Activated naive CD4-positive, alpha-beta T cell treated with anti-CD3 and anti-CD28 coated beads, Interleukin-2, amount 10 ng/mL, durations not matched to agents 7 days and 5 days (primary cell): ENCODE measurements at regions of chr14 and their contacts with region 1.

Region 1: GRCh38 chr14:61837336-61838229 is 75.4 kb downstream of the SNAPC1 start:
- DNase-seq: peak; percentile 84
- H3K4me3 Mint-ChIP-seq: no peak overlapping the region
- H3K27ac Mint-ChIP-seq: no peak overlapping the region
- H3K4me1 Mint-ChIP-seq: peaks cover 8% of the 10 kb centered on the region
- H3K27me3 Mint-ChIP-seq: peaks cover 7% of the 10 kb centered on the region

Region 2: DNA sequence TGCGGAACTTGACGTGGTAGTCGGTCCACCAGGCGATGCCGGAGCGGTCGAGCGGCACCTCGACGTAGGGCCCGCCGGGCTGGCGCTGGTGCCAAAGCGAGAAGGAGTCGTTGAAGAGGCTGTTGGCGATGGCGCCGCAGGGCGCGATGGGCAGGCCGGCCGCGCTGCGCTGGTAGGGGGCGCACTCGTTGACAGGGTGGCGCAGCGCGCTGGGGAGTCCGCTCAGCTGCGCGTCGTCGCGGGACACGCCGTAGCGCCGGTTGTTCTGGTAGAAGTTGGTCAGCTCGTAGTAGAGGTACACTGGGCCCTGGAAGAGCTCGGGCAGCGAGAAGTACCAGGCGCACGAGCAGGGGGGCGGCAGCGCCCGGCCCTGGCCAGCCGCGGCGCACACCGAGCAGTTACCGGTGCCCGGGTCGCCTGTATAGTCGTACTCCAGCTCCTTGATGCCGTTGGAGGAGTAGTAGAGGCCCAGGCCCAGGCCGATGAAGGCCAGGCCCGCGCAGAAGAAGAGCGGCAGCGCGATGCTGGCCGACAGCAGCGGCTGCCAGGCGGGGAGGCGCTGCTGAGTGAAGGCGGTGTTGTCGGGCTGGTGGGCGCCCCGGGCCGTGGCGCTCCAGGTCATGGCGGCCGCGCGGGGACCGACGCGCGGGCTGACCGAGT is 556.9 kb before region 1 on chr14:
- CTCF ChIA-PET with region 1: interaction called, 14 read pairs
- DNase-seq: peak; percentile 78
- H3K4me3 Mint-ChIP-seq: peak overlapping the region; percentile 81
- H3K27ac Mint-ChIP-seq: peak overlapping the region; percentile 80
- H3K4me1 Mint-ChIP-seq: peaks cover 35% of the 10 kb centered on the region
- H3K27me3 Mint-ChIP-seq: peaks cover 48% of the 10 kb centered on the region

Region 3: DNA sequence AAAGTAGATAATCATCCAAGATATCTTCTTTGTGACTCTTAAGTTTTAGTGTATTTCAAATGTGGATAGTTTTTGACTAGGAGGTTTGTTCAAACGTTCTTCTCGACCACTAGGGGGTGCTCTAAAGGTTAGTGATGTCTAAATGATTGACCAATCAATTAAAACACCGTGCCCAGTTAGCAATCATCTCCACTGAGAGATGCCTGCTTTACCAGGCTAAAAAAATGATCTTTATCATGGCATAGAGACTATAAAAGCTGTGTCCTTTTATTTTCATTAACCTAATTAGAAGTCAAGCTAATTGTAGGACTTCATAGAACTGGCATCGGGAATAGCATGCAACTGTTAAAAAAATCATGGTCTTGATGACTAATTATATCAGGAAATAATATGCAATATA is 362.3 kb before region 1 on chr14:
- CTCF ChIA-PET with region 1: interaction called, 38 read pairs
- DNase-seq: no peak
- H3K4me3 Mint-ChIP-seq: peak overlapping the region; percentile 18
- H3K27ac Mint-ChIP-seq: peak overlapping the region; percentile 95
- H3K4me1 Mint-ChIP-seq: peaks cover 95% of the 10 kb centered on the region
- H3K27me3 Mint-ChIP-seq: no peaks in the 10 kb centered on the region

Region 4: GRCh38 chr14:61644834-61645233 is 192.7 kb before region 1 on chr14:
- CTCF ChIA-PET with region 1: no interaction called
- DNase-seq: no peak
- H3K4me3 Mint-ChIP-seq: no peak overlapping the region
- H3K27ac Mint-ChIP-seq: no peak overlapping the region
- H3K4me1 Mint-ChIP-seq: peaks cover 26% of the 10 kb centered on the region
- H3K27me3 Mint-ChIP-seq: no peaks in the 10 kb centered on the region

Region 5: GRCh38 chr14:61678975-61679374 is 158.6 kb before region 1 on chr14:
- CTCF ChIA-PET with region 1: no interaction called
- DNase-seq: no peak
- H3K4me3 Mint-ChIP-seq: no peak overlapping the region
- H3K27ac Mint-ChIP-seq: no peak overlapping the region
- H3K4me1 Mint-ChIP-seq: peaks cover 5% of the 10 kb centered on the region
- H3K27me3 Mint-ChIP-seq: peaks cover 11% of the 10 kb centered on the region

Region 6: GRCh38 chr14:61694830-61695694 is 142.5 kb before region 1 on chr14 and contains the start of gene HIF1A:
- CTCF ChIA-PET with region 1: no interaction called
- DNase-seq: peak; percentile 98
- H3K4me3 Mint-ChIP-seq: peak within 1 kb of the TSS; percentile 91
- H3K27ac Mint-ChIP-seq: peak within 1 kb of the TSS; percentile 97
- H3K4me1 Mint-ChIP-seq: peaks cover 62% of the 10 kb centered on the region
- H3K27me3 Mint-ChIP-seq: no peaks in the 10 kb centered on the region

Region 7: DNA sequence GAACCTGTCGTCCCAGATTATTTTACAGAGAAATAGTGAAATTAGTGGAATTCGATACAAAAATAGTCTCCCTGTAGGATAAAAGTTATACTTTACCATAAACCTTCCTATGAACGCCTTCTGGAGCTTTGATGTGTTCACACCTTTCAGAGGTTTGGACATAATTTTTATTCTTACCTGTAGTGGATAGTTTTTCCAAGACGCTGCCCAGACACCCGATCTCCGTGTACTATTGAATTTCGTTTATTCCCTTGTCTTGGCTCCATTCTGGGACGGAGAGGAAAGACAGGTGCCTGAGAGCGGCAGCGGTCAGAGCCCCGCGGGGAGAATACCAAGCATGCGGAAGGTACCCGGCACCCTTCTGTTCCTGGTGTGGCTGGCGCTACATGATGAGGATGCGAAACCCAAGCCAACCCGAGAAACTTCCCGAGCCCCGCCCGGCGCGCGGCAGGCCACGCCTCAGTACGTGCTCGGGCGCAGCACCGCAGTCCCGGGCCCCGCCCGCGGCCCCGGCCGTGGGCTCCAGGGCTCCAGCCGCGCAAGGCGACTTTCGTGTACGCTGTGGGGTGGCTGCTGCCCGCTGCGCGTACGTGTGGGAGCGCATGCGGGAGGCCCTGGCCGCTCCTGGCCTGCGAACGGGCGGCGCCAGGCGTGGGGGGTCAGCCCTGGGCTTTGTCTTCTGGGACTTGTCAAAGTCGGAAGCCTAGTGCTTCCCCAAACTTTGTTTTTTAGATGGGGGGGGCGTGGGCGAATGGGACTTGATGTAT is 86.7 kb before region 1 on chr14:
- CTCF ChIA-PET with region 1: interaction called, 23 read pairs
- DNase-seq: peak; percentile 89
- H3K4me3 Mint-ChIP-seq: peak overlapping the region; percentile 95
- H3K27ac Mint-ChIP-seq: peak overlapping the region; percentile 86
- H3K4me1 Mint-ChIP-seq: peaks cover 53% of the 10 kb centered on the region
- H3K27me3 Mint-ChIP-seq: peaks cover 5% of the 10 kb centered on the region

Region 8: GRCh38 chr14:61780125-61780524 is 57.5 kb before region 1 on chr14:
- CTCF ChIA-PET with region 1: interaction called, 13 read pairs
- DNase-seq: peak; percentile 42
- H3K4me3 Mint-ChIP-seq: peak overlapping the region; percentile 49
- H3K27ac Mint-ChIP-seq: peak overlapping the region; percentile 92
- H3K4me1 Mint-ChIP-seq: peaks cover 48% of the 10 kb centered on the region
- H3K27me3 Mint-ChIP-seq: no peaks in the 10 kb centered on the region

Region 9: GRCh38 chr14:61866932-61867920 is 29.6 kb after region 1 on chr14:
- CTCF ChIA-PET with region 1: no interaction called
- DNase-seq: no peak
- H3K4me3 Mint-ChIP-seq: no peak overlapping the region
- H3K27ac Mint-ChIP-seq: no peak overlapping the region
- H3K4me1 Mint-ChIP-seq: peaks cover 3% of the 10 kb centered on the region
- H3K27me3 Mint-ChIP-seq: peaks cover 28% of the 10 kb centered on the region